HEK293 (cell line): ENCODE measurements at regions of chr1 and their contacts with region 1.

Region 1: DNA sequence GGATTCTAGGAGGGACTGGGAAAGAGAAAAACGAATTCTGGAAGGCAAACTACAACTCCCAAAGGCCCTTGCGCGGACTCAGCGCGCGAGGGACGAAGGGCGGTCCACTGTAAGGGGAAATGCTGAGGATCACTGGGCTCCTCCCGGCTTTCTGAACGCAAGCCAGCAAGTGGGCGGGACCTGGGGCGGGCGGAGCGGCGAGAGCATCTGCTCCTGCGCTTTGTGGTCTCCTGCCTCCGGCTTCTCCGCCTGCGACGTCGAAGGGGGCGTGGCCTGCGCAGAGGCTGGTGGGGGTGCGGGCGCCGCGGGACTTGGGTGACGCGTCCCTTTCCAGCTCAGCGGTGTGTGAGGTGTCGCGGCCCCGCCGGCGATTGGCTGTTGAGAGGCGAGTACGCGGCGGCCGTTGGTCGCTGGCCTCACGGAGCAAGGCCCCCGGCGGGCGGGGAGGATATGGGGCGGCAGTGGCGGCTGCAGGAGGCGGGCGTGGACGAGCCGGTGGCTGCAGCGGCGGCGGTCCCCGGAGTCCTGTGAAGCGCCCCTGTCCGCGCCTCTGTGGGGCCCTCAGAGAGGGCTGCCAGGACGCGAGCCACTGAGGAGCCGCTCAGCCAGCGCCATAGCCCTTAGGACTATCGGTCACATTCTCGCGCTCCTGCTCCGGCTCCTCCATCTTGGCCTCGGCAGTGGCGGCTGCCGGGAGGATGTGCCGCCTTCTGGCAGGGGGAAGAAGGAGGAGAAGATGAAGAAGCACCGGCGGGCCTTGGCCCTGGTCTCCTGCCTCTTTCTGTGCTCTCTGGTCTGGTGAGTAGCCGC is at the start of gene SUCO:
- H3K4me3 ChIP-seq: peak within 1 kb of the TSS; percentile 98
- H3K27ac ChIP-seq: peak within 1 kb of the TSS; percentile 79
- H3K4me1 ChIP-seq: no peaks in the 10 kb centered on the region
- CTCF ChIP-seq: peak; percentile 65

Region 2: DNA sequence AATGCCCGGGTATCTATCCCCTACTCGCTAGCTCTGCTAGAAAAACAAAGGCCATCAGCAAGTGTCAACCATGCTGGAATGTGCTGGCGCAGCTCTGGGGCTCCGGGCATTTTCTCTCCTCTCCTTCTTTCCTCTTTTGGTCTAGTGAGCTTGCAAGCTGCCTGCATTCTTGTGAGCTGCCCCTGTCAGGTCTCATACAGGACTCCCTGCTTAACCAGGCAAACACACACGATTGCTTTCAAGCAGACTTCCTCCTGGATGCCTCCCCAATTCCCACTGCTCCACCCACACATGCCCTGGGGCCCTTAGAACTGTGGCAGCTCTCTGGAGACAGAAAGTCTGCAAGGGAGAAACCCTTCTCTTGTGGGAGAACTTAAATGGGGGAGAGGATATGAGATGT is 35.7 kb before region 1 on chr1:
- CTCF ChIA-PET with region 1: no interaction called
- POLR2A ChIA-PET with region 1: interaction called, 11 read pairs
- H3K4me3 ChIP-seq: no peak overlapping the region
- H3K27ac ChIP-seq: no peak overlapping the region
- H3K4me1 ChIP-seq: no peaks in the 10 kb centered on the region
- CTCF ChIP-seq: no peak